Activated CD4-positive, alpha-beta memory T cell treated with anti-CD3 and anti-CD28 coated beads for 36 hours (primary cell): ENCODE measurements at regions of chr10 and their contacts with region 1.

Region 1: DNA sequence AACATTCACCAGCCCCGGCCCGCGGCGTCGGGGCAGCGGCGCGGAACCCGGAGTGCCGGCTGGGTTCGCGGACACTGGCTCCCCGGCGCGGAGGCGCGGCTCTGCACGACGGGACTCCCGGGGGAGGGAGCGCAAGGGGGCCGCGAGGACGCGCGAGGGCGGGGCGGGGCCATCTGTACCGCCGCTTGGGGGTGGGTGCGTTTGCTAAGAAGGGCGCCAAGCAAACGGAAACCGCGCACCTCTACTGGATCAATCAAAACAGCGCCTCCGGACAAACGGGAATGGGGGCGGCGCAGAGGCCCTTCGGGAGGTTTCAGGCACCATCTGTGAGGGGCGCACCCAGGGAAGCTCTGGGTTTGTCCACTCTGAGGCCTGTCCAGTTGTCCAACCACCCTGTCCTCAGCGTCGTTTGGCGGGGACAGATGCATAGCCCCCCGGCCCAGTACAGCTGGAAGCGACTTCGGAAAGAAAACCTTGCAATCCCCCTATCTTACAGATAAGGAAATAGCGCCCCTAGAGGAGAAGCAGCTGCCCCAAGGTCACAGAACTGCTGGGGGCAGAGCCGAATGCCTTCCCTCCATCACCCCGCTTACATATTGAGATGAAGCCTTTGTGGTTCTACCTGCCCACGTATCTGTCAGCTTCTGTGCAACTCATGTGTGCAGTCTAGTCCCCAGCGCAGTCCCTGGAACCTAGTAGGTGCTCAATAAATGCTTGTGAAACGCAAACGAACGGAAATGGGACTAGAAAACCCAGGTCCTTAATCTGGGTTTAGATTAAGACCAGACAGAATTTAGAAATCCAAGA is 10.7 kb upstream of the SLIT1 start:
- DNase-seq: peak; percentile 73
- H3K4me3 Mint-ChIP-seq: peak overlapping the region; percentile 64
- H3K27ac Mint-ChIP-seq: no peak overlapping the region
- H3K4me1 Mint-ChIP-seq: peaks cover 10% of the 10 kb centered on the region
- H3K27me3 Mint-ChIP-seq: peaks cover 24% of the 10 kb centered on the region

Region 2: GRCh38 chr10:96431211-96431970 is 765.0 kb before region 1 on chr10:
- CTCF ChIA-PET with region 1: interaction called, 10 read pairs
- POLR2A ChIA-PET with region 1: no interaction called
- intact Hi-C with region 1: no loop called
- DNase-seq: no peak
- H3K4me3 Mint-ChIP-seq: no peak overlapping the region
- H3K27ac Mint-ChIP-seq: no peak overlapping the region
- H3K4me1 Mint-ChIP-seq: no peaks in the 10 kb centered on the region
- H3K27me3 Mint-ChIP-seq: peaks cover 16% of the 10 kb centered on the region

Region 3: DNA sequence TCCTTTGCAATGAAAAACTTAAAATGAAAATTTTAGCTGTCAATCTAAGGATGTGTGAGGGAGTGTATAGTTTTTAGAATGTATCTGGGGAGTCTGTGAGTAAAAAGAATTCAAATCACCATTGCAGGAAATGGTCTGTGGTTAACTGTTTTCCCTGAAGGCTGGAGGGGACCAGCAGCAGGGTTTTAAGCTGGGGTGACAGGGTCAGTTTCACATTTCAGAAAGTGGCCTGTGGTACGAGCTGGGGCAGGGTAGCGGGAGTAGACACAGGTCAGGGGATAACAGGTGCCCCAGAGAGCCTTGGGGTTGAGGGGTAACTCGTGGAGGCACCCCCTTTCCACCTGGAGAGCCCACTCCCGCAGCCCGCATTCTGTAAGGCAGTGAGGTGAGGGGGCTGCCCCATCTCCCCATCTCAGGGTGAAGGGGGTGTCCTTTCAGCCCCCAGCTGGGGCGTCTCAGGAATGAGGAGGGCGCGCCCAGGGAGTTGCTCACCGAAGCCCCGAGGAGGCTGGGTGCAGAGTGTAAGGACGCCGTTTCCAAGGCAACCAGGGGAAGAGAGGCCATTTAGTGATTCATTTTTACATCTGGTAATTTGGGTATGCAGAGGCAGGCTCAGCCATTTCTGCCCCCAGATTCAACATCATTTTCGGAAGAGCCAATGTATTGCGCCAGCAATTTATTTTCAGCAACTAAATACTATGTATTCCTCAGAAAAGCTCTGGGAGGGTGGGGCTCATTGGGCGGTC is 179.5 kb before region 1 on chr10:
- CTCF ChIA-PET with region 1: no interaction called
- POLR2A ChIA-PET with region 1: no interaction called
- intact Hi-C with region 1: no loop called
- DNase-seq: peak; percentile 53
- H3K4me3 Mint-ChIP-seq: no peak overlapping the region
- H3K27ac Mint-ChIP-seq: no peak overlapping the region
- H3K4me1 Mint-ChIP-seq: peaks cover 11% of the 10 kb centered on the region
- H3K27me3 Mint-ChIP-seq: no peaks in the 10 kb centered on the region

Region 4: GRCh38 chr10:97081621-97082235 is 114.7 kb before region 1 on chr10:
- CTCF ChIA-PET with region 1: interaction called, 364 read pairs
- POLR2A ChIA-PET with region 1: no interaction called
- intact Hi-C with region 1: no loop called
- DNase-seq: peak; percentile 72
- H3K4me3 Mint-ChIP-seq: no peak overlapping the region
- H3K27ac Mint-ChIP-seq: no peak overlapping the region
- H3K4me1 Mint-ChIP-seq: no peaks in the 10 kb centered on the region
- H3K27me3 Mint-ChIP-seq: peaks cover 21% of the 10 kb centered on the region

Region 5: DNA sequence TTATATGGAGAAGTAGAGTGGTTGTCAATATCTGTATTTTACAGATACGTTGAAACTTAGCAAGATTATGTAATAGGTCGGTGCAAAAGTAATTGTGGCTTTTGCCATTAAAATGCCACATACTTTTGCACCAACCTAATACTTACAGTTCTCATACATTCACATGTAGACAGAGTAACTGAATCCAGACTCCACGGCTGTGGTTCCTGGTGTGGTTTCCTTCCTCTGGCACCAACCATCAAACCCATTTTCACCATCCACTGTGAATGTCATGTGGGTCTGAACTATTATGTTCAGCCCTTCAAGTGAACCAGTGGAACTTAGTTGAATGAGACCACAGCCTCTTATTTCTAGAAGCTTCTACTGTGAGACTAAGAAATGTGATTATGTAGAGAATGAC is 20.9 kb after region 1 on chr10:
- CTCF ChIA-PET with region 1: interaction called, 180 read pairs
- POLR2A ChIA-PET with region 1: no interaction called
- intact Hi-C with region 1: no loop called
- DNase-seq: no peak
- H3K4me3 Mint-ChIP-seq: no peak overlapping the region
- H3K27ac Mint-ChIP-seq: no peak overlapping the region
- H3K4me1 Mint-ChIP-seq: peaks cover 29% of the 10 kb centered on the region
- H3K27me3 Mint-ChIP-seq: no peaks in the 10 kb centered on the region